ENCODE measurements at regions of chr7 and their contacts with region 1.

Region 1: DNA sequence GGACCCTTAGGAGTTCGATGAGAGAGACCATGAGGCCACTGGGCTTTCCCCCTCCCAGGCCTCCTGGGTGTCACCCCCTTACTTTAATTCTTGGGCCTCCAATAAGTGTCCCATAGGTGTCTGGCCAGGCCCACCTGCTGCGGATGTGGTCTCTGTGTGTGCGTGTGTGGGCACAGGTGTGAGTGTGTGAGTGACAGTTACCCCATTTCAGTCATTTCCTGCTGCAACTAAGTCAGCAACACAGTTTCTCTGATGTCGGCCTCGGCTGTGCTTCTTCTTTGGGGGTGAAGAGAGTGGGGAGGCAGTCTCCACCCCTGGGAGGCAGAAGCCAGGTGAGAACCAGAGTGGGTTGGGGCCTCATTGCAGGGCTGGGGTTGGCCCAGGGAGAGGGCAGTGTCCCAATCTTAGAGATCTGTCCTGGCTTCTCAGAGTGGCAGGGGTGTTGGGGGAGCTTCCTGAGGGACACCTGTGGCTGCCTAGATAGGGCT is 1.5 kb downstream of the PVRIG start:
- H3K4me3 ChIP-seq: no peak overlapping the region
- H3K27ac ChIP-seq: no peak overlapping the region
- H3K4me1 ChIP-seq: no peaks in the 10 kb centered on the region
- CTCF ChIP-seq: no peak

Region 2: GRCh38 chr7:100177045-100178001 is 44.0 kb before region 1 on chr7 and contains the starts of genes GPC2 and STAG3:
- CTCF ChIA-PET with region 1: interaction called, 3 read pairs
- POLR2A ChIA-PET with region 1: interaction called, 11 read pairs
- H3K4me3 ChIP-seq: peak within 1 kb of the TSS; percentile 66
- H3K27ac ChIP-seq: no peak within 1 kb of the TSS
- H3K4me1 ChIP-seq: no peaks in the 10 kb centered on the region
- CTCF ChIP-seq: no peak

Region 3: GRCh38 chr7:100208911-100209408 is 12.3 kb before region 1 on chr7:
- CTCF ChIA-PET with region 1: interaction called, 20 read pairs
- POLR2A ChIA-PET with region 1: no interaction called
- H3K4me3 ChIP-seq: no peak overlapping the region
- H3K27ac ChIP-seq: no peak overlapping the region
- H3K4me1 ChIP-seq: no peaks in the 10 kb centered on the region
- CTCF ChIP-seq: no peak

Measured in HEK293 (cell line).